Ascending aorta (tissue), 2 donors: ENCODE measurements at regions of chr15 and their contacts with region 1.

Region 1: GRCh38 chr15:84716036-84716799 is at the start of gene SEC11A:
- DNase-seq: peak; percentile 88 to 98
- H3K4me3 ChIP-seq: peak within 1 kb of the TSS; percentile 70 to 77
- H3K27ac ChIP-seq: peak within 1 kb of the TSS; percentile 88
- H3K4me1 ChIP-seq: peaks cover 3 to 10% of the 10 kb centered on the region in 2 donors
- H3K27me3 ChIP-seq: no peaks in the 10 kb centered on the region
- CTCF ChIP-seq: no peak
- total RNA-seq, gene SEC11A: 31.6 TPM

Region 2: GRCh38 chr15:84600851-84601838 is 115.1 kb before region 1 on chr15 and contains the start of gene ZSCAN2:
- intact Hi-C with region 1: loop called (anchors 1 kb)
- DNase-seq: peak; percentile 90 to 98
- H3K4me3 ChIP-seq: peak within 1 kb of the TSS; percentile 85 to 91
- H3K27ac ChIP-seq: peak within 1 kb of the TSS; percentile 43 to 72
- H3K4me1 ChIP-seq: peaks cover 0 to 13% of the 10 kb centered on the region in 2 donors
- H3K27me3 ChIP-seq: no peaks in the 10 kb centered on the region
- CTCF ChIP-seq: no peak
- total RNA-seq, gene ZSCAN2: 4.6 TPM

Region 3: GRCh38 chr15:84734794-84735479 is 18.7 kb after region 1 on chr15:
- intact Hi-C with region 1: no loop called
- DNase-seq: peak in 1 of 2 donors; percentile 68
- H3K4me3 ChIP-seq: no peak overlapping the region
- H3K27ac ChIP-seq: no peak overlapping the region
- H3K4me1 ChIP-seq: no peaks in the 10 kb centered on the region
- H3K27me3 ChIP-seq: no peaks in the 10 kb centered on the region
- CTCF ChIP-seq: no peak